ENCODE measurements at regions of chr12 and their contacts with region 1.

Region 1: DNA sequence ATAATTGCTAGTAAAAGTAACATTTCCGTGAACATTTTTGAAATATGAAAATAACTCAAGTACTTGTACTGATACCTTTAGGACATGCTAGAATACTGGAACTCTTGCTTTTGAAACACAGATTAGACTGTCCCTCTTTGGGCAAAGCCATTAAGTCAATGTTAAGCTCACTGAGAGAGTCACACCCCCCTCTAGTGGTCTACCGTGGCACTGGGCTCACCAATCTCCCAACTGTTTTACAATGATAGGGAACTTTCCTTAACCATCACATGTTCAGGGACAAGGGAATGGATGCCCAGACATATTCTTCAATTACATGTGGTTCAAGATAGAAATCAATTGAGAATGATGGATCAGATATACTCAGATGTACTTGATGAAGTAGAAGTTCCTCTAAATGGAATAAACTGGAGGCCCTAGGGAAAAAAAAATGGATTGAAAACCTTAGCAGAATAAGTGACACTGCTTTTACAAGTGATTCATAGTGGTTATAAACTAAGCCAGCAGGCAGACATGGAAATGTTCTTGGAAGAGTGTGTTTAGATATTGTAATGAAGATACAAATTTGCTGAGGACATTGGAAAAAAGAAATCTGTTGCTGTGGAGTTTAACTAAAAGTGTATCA is 17.8 kb downstream of the NANOG start:
- DNase-seq: peak; percentile 56
- H3K4me3 ChIP-seq: no peak overlapping the region
- H3K27ac ChIP-seq: no peak overlapping the region
- H3K4me1 ChIP-seq: peaks cover 14% of the 10 kb centered on the region
- H3K27me3 ChIP-seq: no peaks in the 10 kb centered on the region
- CTCF ChIP-seq: peak; percentile 95 to 98

Region 2: GRCh38 chr12:7219599-7220243 is 587.3 kb before region 1 on chr12:
- CTCF ChIA-PET with region 1: no interaction called
- dilution Hi-C with region 1: no loop called
- in situ Hi-C with region 1: no loop called
- intact Hi-C with region 1: loop called (anchors 10 kb)
- DNase-seq: peak; percentile 56
- H3K4me3 ChIP-seq: no peak overlapping the region
- H3K27ac ChIP-seq: no peak overlapping the region
- H3K4me1 ChIP-seq: peaks cover 3% of the 10 kb centered on the region
- H3K27me3 ChIP-seq: peaks cover 9% of the 10 kb centered on the region
- CTCF ChIP-seq: peak; percentile 87 to 94

Region 3: GRCh38 chr12:7344833-7345606 is 462.0 kb before region 1 on chr12:
- CTCF ChIA-PET with region 1: interaction called, 10 read pairs
- dilution Hi-C with region 1: no loop called
- in situ Hi-C with region 1: no loop called
- intact Hi-C with region 1: no loop called
- DNase-seq: no peak
- H3K4me3 ChIP-seq: no peak overlapping the region
- H3K27ac ChIP-seq: no peak overlapping the region
- H3K4me1 ChIP-seq: no peaks in the 10 kb centered on the region
- H3K27me3 ChIP-seq: no peaks in the 10 kb centered on the region
- CTCF ChIP-seq: no peak

Region 4: DNA sequence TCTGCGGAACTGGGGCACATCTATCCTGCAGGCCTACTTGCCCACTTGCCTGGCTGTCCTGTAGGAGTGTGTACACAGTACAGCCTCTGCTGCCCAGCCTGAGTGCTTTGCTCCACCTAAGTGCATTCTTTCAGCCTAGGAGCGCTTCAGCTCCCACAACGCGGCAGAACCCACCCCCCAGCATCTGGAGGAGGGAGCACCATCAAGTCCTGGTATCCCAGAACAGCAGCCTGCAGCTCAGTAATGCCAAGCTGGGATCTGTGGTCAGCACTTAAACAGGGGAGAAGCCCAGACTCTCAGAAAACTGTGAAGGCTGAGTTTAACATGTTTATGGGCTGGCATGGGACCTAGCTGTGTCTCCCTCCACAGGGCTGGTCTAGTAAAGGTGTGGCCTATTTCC is 223.4 kb before region 1 on chr12:
- CTCF ChIA-PET with region 1: no interaction called
- dilution Hi-C with region 1: no loop called
- in situ Hi-C with region 1: no loop called
- intact Hi-C with region 1: loop called (anchors 5 kb)
- DNase-seq: no peak
- H3K4me3 ChIP-seq: no peak overlapping the region
- H3K27ac ChIP-seq: no peak overlapping the region
- H3K4me1 ChIP-seq: no peaks in the 10 kb centered on the region
- H3K27me3 ChIP-seq: peaks cover 8% of the 10 kb centered on the region
- CTCF ChIP-seq: no peak

Region 5: GRCh38 chr12:7678738-7679137 is 128.2 kb before region 1 on chr12:
- CTCF ChIA-PET with region 1: no interaction called
- dilution Hi-C with region 1: no loop called
- in situ Hi-C with region 1: no loop called
- intact Hi-C with region 1: loop called (anchors 1 kb)
- DNase-seq: no peak
- H3K4me3 ChIP-seq: no peak overlapping the region
- H3K27ac ChIP-seq: no peak overlapping the region
- H3K4me1 ChIP-seq: no peaks in the 10 kb centered on the region
- H3K27me3 ChIP-seq: peaks cover 2% of the 10 kb centered on the region
- CTCF ChIP-seq: no peak

Region 6: DNA sequence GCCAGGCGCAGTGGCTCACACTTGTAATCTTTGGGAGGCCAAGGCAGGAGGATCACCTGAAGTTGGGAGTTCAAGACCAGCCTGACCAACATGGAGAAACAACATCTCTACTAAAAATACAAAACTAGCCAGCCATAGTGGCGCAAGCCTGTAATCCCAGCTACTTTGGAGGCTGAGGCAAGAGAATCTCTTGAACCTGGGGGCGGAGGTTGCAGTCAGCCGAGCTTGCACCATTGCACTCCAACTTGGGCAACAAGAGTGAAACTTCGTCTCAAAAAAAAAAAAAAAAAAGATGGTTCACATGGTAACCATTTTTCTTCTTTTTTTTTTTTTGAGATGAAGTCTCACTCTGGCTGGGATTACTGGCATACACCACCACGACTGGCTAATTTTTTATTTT is 30.4 kb after region 1 on chr12:
- CTCF ChIA-PET with region 1: no interaction called
- dilution Hi-C with region 1: no loop called
- in situ Hi-C with region 1: no loop called
- intact Hi-C with region 1: no loop called
- DNase-seq: no peak
- H3K4me3 ChIP-seq: no peak overlapping the region
- H3K27ac ChIP-seq: no peak overlapping the region
- H3K4me1 ChIP-seq: no peaks in the 10 kb centered on the region
- H3K27me3 ChIP-seq: no peaks in the 10 kb centered on the region
- CTCF ChIP-seq: no peak